Activated CD4-positive, alpha-beta T cell treated with anti-CD3 and anti-CD28 coated beads, Interleukin-2, amount 10 ng/mL, durations not matched to agents 24 days and 14 days (primary cell): ENCODE measurements at regions of chr22 and their contacts with region 1.

Region 1: GRCh38 chr22:41940832-41941765 is 5.9 kb downstream of the CENPM start:
- DNase-seq: peak; percentile 96
- H3K4me3 Mint-ChIP-seq: peak overlapping the region; percentile 86
- H3K27ac Mint-ChIP-seq: peak overlapping the region; percentile 100
- H3K4me1 Mint-ChIP-seq: peaks cover 51% of the 10 kb centered on the region
- H3K27me3 Mint-ChIP-seq: peaks cover 2% of the 10 kb centered on the region

Region 2: GRCh38 chr22:41666661-41667258 is 274.3 kb before region 1 on chr22:
- intact Hi-C with region 1: loop called (anchors 1 kb)
- DNase-seq: peak; percentile 99
- H3K4me3 Mint-ChIP-seq: peak overlapping the region; percentile 83
- H3K27ac Mint-ChIP-seq: peak overlapping the region; percentile 92
- H3K4me1 Mint-ChIP-seq: peaks cover 9% of the 10 kb centered on the region
- H3K27me3 Mint-ChIP-seq: no peaks in the 10 kb centered on the region

Region 3: DNA sequence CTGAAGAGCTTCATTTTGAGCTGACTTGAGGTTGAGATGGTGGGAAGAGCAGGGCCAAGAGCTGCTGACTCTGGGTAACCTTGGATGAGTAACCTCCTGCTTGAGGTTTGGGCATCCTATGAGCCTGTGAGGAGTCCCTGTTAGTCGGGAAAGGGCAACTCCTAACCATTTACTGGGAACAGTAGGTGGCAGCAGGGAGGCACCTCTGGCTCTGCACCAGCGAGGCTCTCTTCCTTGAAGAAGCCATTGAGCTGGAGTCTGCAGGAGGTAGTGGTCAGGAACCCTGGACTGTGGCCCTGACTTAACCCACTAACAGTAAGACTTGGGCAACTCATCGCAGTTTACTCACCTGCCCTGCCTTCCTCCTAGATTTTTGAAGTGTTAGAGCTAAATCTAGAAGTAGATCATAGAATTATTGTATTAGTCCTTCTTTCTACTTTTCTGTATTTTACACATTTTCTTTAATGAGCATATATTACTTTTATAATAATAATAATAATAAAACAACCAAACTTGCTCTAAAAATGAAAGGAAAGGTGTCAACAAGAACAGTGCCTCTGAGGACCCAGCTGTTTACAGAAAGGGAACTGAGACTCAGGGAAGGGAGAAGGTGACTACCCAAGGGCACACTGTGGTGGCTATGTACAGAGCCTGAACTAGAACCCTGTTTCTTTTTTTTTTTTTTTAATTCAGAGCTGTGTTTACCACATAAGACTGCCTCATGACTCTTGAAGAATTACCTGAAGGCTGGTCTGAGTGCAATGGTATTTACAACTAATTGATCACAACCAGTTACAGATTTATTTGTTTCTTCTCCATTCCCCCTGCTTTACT is 194.3 kb before region 1 on chr22:
- intact Hi-C with region 1: loop called (anchors 2 kb)
- DNase-seq: peak; percentile 88
- H3K4me3 Mint-ChIP-seq: no peak overlapping the region
- H3K27ac Mint-ChIP-seq: no peak overlapping the region
- H3K4me1 Mint-ChIP-seq: peaks cover 6% of the 10 kb centered on the region
- H3K27me3 Mint-ChIP-seq: peaks cover 41% of the 10 kb centered on the region

Region 4: GRCh38 chr22:41822317-41823060 is 118.6 kb before region 1 on chr22:
- intact Hi-C with region 1: loop called (anchors 1 kb)
- DNase-seq: peak; percentile 83
- H3K4me3 Mint-ChIP-seq: no peak overlapping the region
- H3K27ac Mint-ChIP-seq: peak overlapping the region; percentile 89
- H3K4me1 Mint-ChIP-seq: peaks cover 28% of the 10 kb centered on the region
- H3K27me3 Mint-ChIP-seq: no peaks in the 10 kb centered on the region

Region 5: DNA sequence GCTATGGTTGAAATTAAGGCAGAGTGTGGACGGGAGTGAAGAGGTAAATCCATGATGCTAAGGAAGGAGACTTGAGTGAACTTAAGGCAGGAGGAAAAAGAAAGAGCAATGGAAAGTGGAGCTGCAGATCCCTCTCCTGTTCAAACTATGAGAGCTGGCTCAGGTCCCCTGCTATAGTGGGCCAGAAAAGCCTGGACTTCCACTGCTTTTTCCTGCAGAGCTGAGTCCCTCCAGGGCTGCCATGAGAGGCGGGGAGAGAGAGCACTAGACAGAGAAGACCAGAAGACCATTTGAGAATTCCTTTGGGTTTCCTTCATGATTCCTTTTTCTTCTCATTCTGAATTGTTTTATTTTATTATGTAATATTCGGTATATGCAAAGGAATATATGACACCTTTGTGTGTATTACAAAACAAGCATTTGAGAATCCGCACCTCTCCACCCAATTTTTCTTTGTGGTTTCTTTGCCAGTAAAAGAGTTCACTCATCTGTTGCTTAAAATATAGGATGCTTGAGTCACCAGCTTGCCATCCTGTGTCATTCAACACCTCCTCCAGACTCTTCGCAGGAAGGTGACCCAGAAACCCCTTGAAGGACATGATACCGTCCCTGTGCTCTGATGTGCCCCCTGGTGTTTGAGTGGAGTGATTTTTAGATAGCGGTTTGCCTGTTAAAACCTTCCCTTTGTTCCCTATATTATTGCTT is 83.8 kb before region 1 on chr22:
- intact Hi-C with region 1: loop called (anchors 1 kb)
- DNase-seq: peak; percentile 91
- H3K4me3 Mint-ChIP-seq: peak overlapping the region; percentile 60
- H3K27ac Mint-ChIP-seq: peak overlapping the region; percentile 96
- H3K4me1 Mint-ChIP-seq: peaks cover 64% of the 10 kb centered on the region
- H3K27me3 Mint-ChIP-seq: no peaks in the 10 kb centered on the region

Region 6: DNA sequence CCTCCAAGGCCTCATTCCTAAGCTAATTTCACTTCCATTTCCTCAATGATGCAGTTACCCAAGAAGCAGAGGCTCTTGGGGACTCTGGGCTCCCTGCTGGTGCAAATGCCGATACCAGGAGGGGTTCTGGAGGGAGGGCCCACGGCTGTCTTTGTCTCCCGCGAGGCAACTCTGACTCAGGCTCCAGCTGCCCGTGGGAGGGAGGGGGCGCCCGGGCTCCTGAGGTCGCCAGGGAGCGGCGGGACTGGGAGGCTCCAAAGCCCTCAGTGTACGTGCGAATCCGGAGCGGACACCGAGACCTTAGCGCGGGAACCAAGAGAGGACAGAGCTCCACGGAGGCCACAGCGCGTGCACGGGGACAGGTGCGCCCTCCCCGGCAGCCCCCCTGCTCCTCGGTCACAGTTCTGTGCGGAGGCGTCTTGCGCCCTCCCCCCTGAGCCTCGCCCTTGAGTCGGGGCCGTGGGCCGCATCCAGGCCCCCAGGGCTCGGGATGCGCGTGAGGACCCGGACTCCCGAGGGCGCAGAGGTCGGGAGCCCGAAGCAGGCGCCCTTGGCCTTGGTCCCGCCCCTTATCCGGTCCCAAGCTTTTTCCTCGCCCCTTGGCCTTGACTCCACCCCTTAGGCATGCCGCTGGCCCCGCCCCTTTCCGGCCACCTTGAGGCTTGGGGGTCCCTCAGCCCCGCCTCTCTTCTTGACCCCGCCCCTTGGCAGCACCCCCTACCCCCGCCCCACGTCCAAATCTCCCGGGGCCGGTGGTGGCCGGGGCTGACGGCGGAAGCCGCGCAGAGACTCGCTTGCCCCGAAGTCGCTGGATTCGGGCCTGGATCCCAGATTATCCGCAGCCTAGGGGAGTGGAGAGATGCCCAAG is 21.5 kb before region 1 on chr22:
- intact Hi-C with region 1: loop called (anchors 2 kb)
- DNase-seq: peak; percentile 83
- H3K4me3 Mint-ChIP-seq: peak overlapping the region; percentile 73
- H3K27ac Mint-ChIP-seq: peak overlapping the region; percentile 63
- H3K4me1 Mint-ChIP-seq: peaks cover 18% of the 10 kb centered on the region
- H3K27me3 Mint-ChIP-seq: peaks cover 20% of the 10 kb centered on the region